ENCODE measurements at regions of chrX and their contacts with region 1.

Region 1: DNA sequence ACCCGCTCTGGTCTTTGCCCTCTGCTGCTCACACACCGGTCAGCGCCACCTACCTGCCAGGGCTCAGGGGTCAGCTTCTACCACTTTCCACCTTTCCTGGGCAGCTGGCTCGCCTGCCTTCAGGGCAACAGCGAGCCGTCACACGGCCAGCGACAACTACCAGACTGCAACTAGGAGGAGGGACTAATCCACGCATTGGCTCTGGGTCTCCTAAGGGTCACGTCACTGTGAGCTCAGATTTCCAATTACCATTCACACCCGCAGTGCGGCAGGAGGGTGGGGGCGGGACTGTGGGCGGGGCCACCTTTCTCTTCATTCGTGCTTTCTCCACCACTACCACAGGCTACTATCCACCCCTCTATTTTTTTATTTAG is at the start of gene BEX5:
- DNase-seq: peak in 8 of 9 donors; percentile 20 to 74 (median 62)
- ATAC-seq: peak; percentile 98
- H3K4me3 ChIP-seq: peak within 1 kb of the TSS; percentile 74
- H3K4me3 Mint-ChIP-seq: peak within 1 kb of the TSS; percentile 92 to 99 (median 98)
- H3K27ac ChIP-seq: peak within 1 kb of the TSS; percentile 83
- H3K27ac Mint-ChIP-seq: peak within 1 kb of the TSS; percentile 92 to 99 (median 96)
- H3K4me1 ChIP-seq: no peaks in the 10 kb centered on the region
- H3K4me1 Mint-ChIP-seq: peaks cover 4 to 20% (median 5%) of the 10 kb centered on the region in 7 donors
- H3K27me3 ChIP-seq: no peaks in the 10 kb centered on the region
- H3K27me3 Mint-ChIP-seq: peaks cover 0 to 6% (median 0%) of the 10 kb centered on the region in 5 donors
- total RNA-seq, gene BEX5: 1.8 to 10.1 (median 6.8) TPM

Region 2: DNA sequence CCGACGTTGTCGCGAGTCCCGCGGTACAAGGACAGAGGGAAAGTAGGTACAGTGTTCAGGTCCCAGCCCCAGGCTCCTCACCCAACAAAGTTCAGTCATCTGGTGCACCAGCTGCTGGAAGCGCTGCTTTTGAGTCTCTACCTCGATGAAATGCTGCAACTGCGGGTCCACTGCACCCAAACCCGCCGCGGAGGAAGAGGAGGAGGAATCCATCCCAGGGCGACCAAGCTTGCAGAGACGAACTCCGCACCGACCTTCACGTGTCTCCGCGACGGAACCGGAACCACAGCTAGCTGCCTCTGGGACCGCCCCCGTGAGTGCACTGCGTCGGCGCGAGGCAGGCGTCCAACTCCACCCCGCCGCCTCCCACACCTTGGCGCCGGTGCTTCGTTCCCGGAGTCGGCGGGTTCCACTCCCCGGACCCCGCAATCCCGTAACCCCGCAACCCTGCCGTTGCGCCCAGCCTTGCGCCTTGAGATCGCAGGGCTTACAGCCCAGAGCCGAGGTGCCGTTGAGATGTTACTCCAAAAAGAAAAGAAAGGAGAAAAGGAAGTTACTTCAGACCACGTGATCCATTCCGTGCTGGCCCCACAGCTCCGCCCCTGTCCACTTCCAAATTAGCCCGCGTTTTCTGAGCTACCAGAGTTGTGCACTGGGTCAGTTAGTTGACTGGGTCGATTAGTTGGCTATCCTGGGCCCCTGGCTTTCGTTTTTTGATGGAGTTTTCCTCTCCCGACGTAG is 807.2 kb before region 1 on chrX and contains the start of gene TIMM8A:
- CTCF ChIA-PET with region 1: no interaction called
- POLR2A ChIA-PET with region 1: no interaction called
- intact Hi-C with region 1: loop called in 1 of 2 experiments (anchors 5 kb)
- DNase-seq: peak; percentile 48 to 79 (median 72)
- ATAC-seq: peak; percentile 99
- H3K4me3 ChIP-seq: peak within 1 kb of the TSS; percentile 75
- H3K4me3 Mint-ChIP-seq: peak within 1 kb of the TSS; percentile 84 to 93 (median 91)
- H3K27ac ChIP-seq: peak within 1 kb of the TSS; percentile 91
- H3K27ac Mint-ChIP-seq: peak within 1 kb of the TSS; percentile 80 to 96 (median 91)
- H3K4me1 ChIP-seq: peaks cover 0 to 4% of the 10 kb centered on the region in 2 donors
- H3K4me1 Mint-ChIP-seq: peaks cover 0 to 25% (median 19%) of the 10 kb centered on the region in 7 donors
- H3K27me3 ChIP-seq: no peaks in the 10 kb centered on the region
- H3K27me3 Mint-ChIP-seq: no peaks in the 10 kb centered on the region
- total RNA-seq, gene TIMM8A: 6.7 to 13.6 (median 12.2) TPM

Region 3: GRCh38 chrX:101617211-101618191 is 538.3 kb before region 1 on chrX and contains the start of gene ARMCX6:
- CTCF ChIA-PET with region 1: no interaction called
- POLR2A ChIA-PET with region 1: no interaction called
- intact Hi-C with region 1: loop called in 1 of 2 experiments (anchors 5 kb)
- DNase-seq: peak; percentile 39 to 80 (median 63)
- ATAC-seq: peak; percentile 92
- H3K4me3 ChIP-seq: peak within 1 kb of the TSS; percentile 77
- H3K4me3 Mint-ChIP-seq: peak within 1 kb of the TSS; percentile 89 to 97 (median 92)
- H3K27ac ChIP-seq: peak within 1 kb of the TSS; percentile 79
- H3K27ac Mint-ChIP-seq: peak within 1 kb of the TSS; percentile 71 to 97 (median 94)
- H3K4me1 ChIP-seq: peaks cover 4 to 9% of the 10 kb centered on the region in 2 donors
- H3K4me1 Mint-ChIP-seq: peaks cover 0 to 24% (median 15%) of the 10 kb centered on the region in 7 donors
- H3K27me3 ChIP-seq: no peaks in the 10 kb centered on the region
- H3K27me3 Mint-ChIP-seq: no peaks in the 10 kb centered on the region
- total RNA-seq, gene ARMCX6: 27.3 to 42.5 (median 39.9) TPM

Region 4: DNA sequence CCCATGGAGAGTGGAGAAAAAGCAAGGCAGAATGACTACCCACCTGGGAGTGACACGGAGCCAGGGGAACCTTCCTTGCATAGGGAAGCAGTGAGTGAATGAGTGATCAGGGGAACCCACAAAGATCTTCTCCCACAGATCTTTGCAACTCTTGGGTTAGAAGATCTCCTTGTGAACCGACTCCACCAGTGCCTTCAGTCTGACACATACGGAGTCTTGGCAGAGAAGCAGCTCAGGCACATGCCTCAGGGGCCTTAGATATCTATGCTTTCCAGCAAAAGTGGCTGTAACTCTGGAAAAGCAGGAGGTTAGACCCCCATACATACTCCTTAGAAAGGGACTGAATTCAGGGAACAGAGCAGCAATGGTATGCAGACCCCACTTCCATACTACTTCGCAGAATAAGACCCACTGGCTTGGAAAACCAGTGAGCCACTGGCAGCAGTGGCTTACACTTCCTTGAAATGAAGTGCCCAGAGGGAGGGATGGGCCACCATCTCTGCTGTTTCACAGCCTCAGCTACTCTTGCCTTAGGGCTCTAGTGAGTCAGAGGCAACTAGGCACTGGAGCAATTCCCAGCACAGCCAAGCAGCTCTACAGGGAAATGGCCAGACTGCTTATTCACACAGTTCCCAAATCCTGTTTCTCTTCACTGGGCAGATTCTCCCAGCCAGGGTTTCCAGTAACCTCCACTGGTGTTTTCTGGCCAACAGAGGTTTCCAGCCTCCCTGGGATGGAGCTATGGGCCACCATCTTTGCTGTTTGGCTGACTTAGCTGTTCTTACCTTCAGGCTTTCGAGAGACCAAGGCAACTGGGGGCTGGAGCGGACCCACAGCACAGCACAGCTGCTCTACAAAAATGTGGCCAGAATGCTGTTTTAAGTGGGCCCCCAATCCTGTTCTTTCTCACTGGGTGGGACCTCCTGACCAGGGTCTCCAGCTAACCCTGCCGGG is 113.1 kb before region 1 on chrX:
- CTCF ChIA-PET with region 1: no interaction called
- POLR2A ChIA-PET with region 1: no interaction called
- intact Hi-C with region 1: no loop called
- DNase-seq: no peak
- ATAC-seq: no peak
- H3K4me3 ChIP-seq: no peak overlapping the region
- H3K4me3 Mint-ChIP-seq: no peak overlapping the region
- H3K27ac ChIP-seq: no peak overlapping the region
- H3K27ac Mint-ChIP-seq: no peak overlapping the region
- H3K4me1 ChIP-seq: no peaks in the 10 kb centered on the region
- H3K4me1 Mint-ChIP-seq: no peaks in the 10 kb centered on the region
- H3K27me3 ChIP-seq: no peaks in the 10 kb centered on the region
- H3K27me3 Mint-ChIP-seq: peaks cover 0 to 6% (median 0%) of the 10 kb centered on the region in 5 donors

Region 5: GRCh38 chrX:102115748-102116147 is 40.0 kb before region 1 on chrX:
- CTCF ChIA-PET with region 1: no interaction called
- POLR2A ChIA-PET with region 1: no interaction called
- intact Hi-C with region 1: no loop called
- DNase-seq: no peak
- ATAC-seq: no peak
- H3K4me3 ChIP-seq: no peak overlapping the region
- H3K4me3 Mint-ChIP-seq: no peak overlapping the region
- H3K27ac ChIP-seq: no peak overlapping the region
- H3K27ac Mint-ChIP-seq: no peak overlapping the region
- H3K4me1 ChIP-seq: no peaks in the 10 kb centered on the region
- H3K4me1 Mint-ChIP-seq: no peaks in the 10 kb centered on the region
- H3K27me3 ChIP-seq: no peaks in the 10 kb centered on the region
- H3K27me3 Mint-ChIP-seq: peaks cover 0 to 22% (median 18%) of the 10 kb centered on the region in 5 donors

Region 6: GRCh38 chrX:102129473-102129872 is 26.3 kb before region 1 on chrX:
- CTCF ChIA-PET with region 1: no interaction called
- POLR2A ChIA-PET with region 1: no interaction called
- intact Hi-C with region 1: loop called in 1 of 2 experiments (anchors 2 kb)
- DNase-seq: no peak
- ATAC-seq: no peak
- H3K4me3 ChIP-seq: no peak overlapping the region
- H3K4me3 Mint-ChIP-seq: no peak overlapping the region
- H3K27ac ChIP-seq: no peak overlapping the region
- H3K27ac Mint-ChIP-seq: no peak overlapping the region
- H3K4me1 ChIP-seq: no peaks in the 10 kb centered on the region
- H3K4me1 Mint-ChIP-seq: peaks cover 0 to 9% (median 5%) of the 10 kb centered on the region in 7 donors
- H3K27me3 ChIP-seq: no peaks in the 10 kb centered on the region
- H3K27me3 Mint-ChIP-seq: peaks cover 18 to 39% (median 31%) of the 10 kb centered on the region in 5 donors

Region 7: DNA sequence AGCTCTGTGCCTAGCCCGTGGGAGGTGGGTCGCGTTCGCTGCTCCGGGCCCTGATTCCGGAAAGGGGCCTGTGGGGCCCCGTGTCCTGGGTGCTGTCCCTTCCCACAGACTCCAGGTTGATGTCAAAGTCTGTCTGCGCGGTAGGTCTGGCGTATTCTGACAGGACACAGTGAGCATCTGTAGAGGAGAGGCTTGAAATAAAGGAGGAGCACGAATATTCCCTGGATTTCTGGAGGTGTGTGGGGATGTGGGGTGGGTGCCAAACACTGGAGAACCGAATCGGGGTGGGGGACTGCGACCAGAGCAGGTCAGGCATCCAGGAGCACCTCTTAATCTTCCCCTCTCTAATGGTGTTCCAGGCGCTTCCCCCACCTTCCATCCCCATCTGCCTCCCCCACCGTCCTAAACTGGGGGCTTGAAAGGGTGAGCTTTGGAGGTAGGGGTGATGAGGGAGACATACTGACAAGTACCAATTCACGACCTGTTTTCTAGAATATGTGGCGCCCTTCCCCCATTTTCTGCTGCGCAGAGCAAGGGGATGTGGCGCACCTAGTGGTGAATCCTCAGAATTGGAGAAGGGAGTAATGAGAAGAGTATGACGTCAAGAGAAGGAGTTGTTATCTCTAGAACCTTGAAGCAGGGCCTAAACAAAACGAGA is 496.4 kb after region 1 on chrX:
- CTCF ChIA-PET with region 1: no interaction called
- POLR2A ChIA-PET with region 1: no interaction called
- intact Hi-C with region 1: loop called in 1 of 2 experiments (anchors 2 kb)
- DNase-seq: peak in 8 of 9 donors; percentile 19 to 83 (median 78)
- ATAC-seq: peak; percentile 89
- H3K4me3 ChIP-seq: peak overlapping the region; percentile 83
- H3K4me3 Mint-ChIP-seq: peak overlapping the region; percentile 83 to 100 (median 94)
- H3K27ac ChIP-seq: peak overlapping the region; percentile 88
- H3K27ac Mint-ChIP-seq: peak overlapping the region; percentile 69 to 99 (median 95)
- H3K4me1 ChIP-seq: peaks cover 4 to 5% of the 10 kb centered on the region in 2 donors
- H3K4me1 Mint-ChIP-seq: peaks cover 13 to 48% (median 35%) of the 10 kb centered on the region in 7 donors
- H3K27me3 ChIP-seq: no peaks in the 10 kb centered on the region
- H3K27me3 Mint-ChIP-seq: peaks cover 0 to 9% (median 0%) of the 10 kb centered on the region in 5 donors

Region 8: DNA sequence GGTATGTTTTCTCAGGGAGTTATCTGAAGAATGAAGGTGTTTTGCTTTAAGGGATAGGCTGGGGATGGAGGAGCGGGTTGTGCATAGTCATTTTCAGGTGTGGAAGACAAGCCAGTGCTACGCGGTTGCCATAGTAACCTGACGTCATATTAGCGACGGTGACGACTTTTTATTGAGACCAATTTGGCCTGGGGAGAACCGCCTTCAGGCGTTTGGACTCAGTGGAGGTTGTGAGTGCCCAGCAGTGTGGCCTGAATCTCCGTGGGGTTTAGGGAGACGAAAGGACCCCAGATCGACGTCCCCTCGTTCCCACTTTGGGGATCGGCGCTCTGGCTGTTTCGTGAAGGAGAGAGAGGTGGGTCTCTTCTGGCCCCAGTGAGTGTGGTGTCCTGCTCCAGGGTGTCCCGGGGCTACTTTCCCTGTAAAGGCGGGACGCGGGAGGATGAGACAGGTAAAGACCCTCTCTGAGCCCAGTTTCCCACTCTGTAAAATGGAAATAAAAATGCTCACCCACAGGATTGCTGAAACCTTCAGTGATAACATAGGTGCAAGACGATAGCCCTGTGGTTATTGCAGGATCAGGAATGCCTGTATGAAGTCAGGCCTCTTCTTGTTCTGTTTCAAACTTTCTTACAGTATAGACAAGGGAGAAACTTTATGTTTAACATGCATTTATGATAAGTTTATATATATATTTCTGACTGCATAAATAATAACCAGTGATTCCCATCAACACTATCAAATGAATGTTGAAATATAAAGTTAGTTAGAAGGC is 613.4 kb after region 1 on chrX:
- CTCF ChIA-PET with region 1: no interaction called
- POLR2A ChIA-PET with region 1: no interaction called
- intact Hi-C with region 1: loop called in 1 of 2 experiments (anchors 5 kb)
- DNase-seq: peak; percentile 41 to 81 (median 72)
- ATAC-seq: peak; percentile 90
- H3K4me3 ChIP-seq: peak overlapping the region; percentile 79
- H3K4me3 Mint-ChIP-seq: peak overlapping the region; percentile 83 to 98 (median 96)
- H3K27ac ChIP-seq: peak overlapping the region; percentile 78
- H3K27ac Mint-ChIP-seq: peak overlapping the region; percentile 72 to 99 (median 97)
- H3K4me1 ChIP-seq: no peaks in the 10 kb centered on the region
- H3K4me1 Mint-ChIP-seq: peaks cover 0 to 19% (median 11%) of the 10 kb centered on the region in 7 donors
- H3K27me3 ChIP-seq: no peaks in the 10 kb centered on the region
- H3K27me3 Mint-ChIP-seq: no peaks in the 10 kb centered on the region

Region 9: DNA sequence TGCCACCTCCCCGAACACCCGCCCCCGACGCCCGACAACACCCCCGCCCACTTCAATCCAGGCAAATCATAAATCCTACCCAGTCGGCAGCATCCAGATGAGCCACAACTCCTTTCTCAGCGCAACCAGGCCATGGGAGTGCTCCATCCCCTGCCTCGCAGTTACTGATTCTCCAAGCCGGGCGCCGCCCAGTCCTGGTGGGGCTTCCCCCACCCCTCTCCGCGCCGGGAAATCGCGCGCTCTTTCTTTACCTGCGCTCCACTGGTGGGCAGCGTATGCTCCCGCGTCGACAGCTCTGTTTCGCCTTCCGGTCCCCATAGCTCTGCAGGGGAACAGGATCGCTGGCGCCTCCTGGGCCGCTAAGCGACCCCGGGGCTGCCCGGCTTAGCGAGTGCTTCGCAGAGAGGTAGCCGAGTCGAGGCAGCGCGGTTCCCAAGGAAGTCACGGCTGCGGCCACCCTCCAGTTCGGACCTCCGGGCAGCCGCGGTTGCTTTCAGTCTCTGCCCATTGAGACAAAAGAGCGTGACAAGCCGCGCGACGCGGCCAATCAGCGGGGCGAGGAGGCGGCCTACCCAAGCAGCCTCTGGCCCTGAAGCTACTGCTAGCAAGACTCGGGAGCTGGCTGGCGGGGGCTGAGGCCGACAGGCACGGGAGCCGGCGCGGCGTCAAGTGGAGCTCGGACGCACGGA is 1762.9 kb after region 1 on chrX:
- CTCF ChIA-PET with region 1: no interaction called
- POLR2A ChIA-PET with region 1: no interaction called
- intact Hi-C with region 1: loop called in 1 of 2 experiments (anchors 2 kb)
- DNase-seq: peak; percentile 19 to 64 (median 61)
- ATAC-seq: peak; percentile 86
- H3K4me3 ChIP-seq: peak overlapping the region; percentile 70
- H3K4me3 Mint-ChIP-seq: peak overlapping the region; percentile 89 to 97 (median 92)
- H3K27ac ChIP-seq: peak overlapping the region; percentile 74
- H3K27ac Mint-ChIP-seq: peak overlapping the region; percentile 79 to 95 (median 89)
- H3K4me1 ChIP-seq: peaks cover 3 to 8% of the 10 kb centered on the region in 2 donors
- H3K4me1 Mint-ChIP-seq: peaks cover 9 to 29% (median 18%) of the 10 kb centered on the region in 7 donors
- H3K27me3 ChIP-seq: no peaks in the 10 kb centered on the region
- H3K27me3 Mint-ChIP-seq: no peaks in the 10 kb centered on the region

Measured in naive thymus-derived CD4-positive, alpha-beta T cell (primary cell).